ENCODE measurements at regions of chr3 and their contacts with region 1.

Region 1: GRCh38 chr3:136042608-136043221 is 77.2 kb downstream of the PPP2R3A start:
- DNase-seq: no peak
- H3K4me3 Mint-ChIP-seq: no peak overlapping the region
- H3K27ac Mint-ChIP-seq: no peak overlapping the region
- H3K4me1 Mint-ChIP-seq: no peaks in the 10 kb centered on the region
- H3K27me3 Mint-ChIP-seq: peaks cover 11% of the 10 kb centered on the region

Region 2: DNA sequence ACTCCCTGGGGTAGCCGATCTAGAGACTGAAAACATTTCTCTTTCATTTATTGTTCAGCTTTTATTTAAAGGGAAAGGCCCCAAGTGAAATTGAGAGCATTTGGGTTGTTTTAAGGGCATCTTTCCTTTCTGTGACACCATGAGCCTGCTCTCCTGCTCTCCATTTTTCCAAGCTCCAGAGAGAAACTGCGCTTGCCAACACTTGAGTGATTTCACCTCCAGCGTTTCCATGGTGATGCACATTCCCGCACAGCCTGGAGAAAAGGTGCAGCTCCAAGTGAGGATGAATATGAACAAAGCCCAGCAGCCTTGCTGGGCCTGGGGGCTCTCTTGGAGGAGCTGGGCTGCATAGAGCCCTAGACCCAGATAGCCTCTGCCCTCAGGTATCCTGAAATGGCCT is 236.4 kb before region 1 on chr3:
- CTCF ChIA-PET with region 1: no interaction called
- POLR2A ChIA-PET with region 1: no interaction called
- intact Hi-C with region 1: no loop called
- DNase-seq: no peak
- H3K4me3 Mint-ChIP-seq: no peak overlapping the region
- H3K27ac Mint-ChIP-seq: no peak overlapping the region
- H3K4me1 Mint-ChIP-seq: no peaks in the 10 kb centered on the region
- H3K27me3 Mint-ChIP-seq: no peaks in the 10 kb centered on the region

Region 3: GRCh38 chr3:135918580-135918962 is 124.1 kb before region 1 on chr3:
- CTCF ChIA-PET with region 1: interaction called, 10 read pairs
- POLR2A ChIA-PET with region 1: no interaction called
- intact Hi-C with region 1: loop called (anchors 5 kb)
- DNase-seq: no peak
- H3K4me3 Mint-ChIP-seq: no peak overlapping the region
- H3K27ac Mint-ChIP-seq: no peak overlapping the region
- H3K4me1 Mint-ChIP-seq: no peaks in the 10 kb centered on the region
- H3K27me3 Mint-ChIP-seq: peaks cover 3% of the 10 kb centered on the region

Region 4: DNA sequence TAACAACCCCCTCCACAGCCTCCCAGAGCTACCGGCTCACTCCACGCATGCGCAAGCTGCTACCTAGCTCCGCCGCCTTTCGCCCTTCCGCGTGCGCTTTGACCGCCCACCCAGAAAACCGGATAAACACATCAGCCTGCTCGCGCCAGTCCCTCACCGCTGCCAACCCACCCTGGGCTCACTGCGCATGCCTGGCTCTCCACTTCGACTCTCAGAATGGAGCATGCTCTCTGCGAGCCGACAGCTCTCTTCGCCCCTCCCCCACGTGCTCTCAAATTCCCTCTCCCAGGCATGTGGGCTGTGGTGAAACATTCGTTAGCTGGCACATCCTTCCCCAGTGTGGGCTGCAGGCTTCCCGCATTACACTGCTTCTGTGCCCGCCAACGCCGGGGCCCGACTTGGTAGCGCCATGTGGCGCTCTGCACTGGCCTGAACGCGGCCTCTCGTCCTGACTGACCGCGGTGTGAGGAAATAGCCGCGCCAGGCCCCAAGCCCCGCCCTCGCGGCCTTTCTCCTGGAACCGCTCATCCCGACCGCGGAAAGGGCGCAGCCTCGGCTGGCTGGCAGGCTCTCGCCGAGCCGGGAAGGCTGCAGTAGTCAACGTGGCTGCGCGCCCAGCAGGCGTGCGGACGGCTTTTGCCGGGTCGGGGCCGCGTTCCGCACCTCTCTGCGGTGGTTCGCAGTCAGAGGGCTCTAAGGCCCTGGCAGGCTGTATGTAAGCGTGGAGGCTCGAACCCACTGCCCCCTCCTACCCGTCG is 153.9 kb after region 1 on chr3:
- CTCF ChIA-PET with region 1: no interaction called
- POLR2A ChIA-PET with region 1: no interaction called
- intact Hi-C with region 1: no loop called
- DNase-seq: peak; percentile 100
- H3K4me3 Mint-ChIP-seq: peak overlapping the region; percentile 95
- H3K27ac Mint-ChIP-seq: peak overlapping the region; percentile 99
- H3K4me1 Mint-ChIP-seq: peaks cover 18% of the 10 kb centered on the region
- H3K27me3 Mint-ChIP-seq: peaks cover 5% of the 10 kb centered on the region